Transverse colon (tissue), 4 donors: ENCODE measurements at regions of chr12 and their contacts with region 1.

Region 1: GRCh38 chr12:79993106-79993862 is 58.4 kb upstream of the PPP1R12A start:
- DNase-seq: no peak
- H3K4me3 ChIP-seq: no peak overlapping the region
- H3K27ac ChIP-seq: no peak overlapping the region
- H3K4me1 ChIP-seq: peaks cover 0 to 2% (median 0%) of the 10 kb centered on the region in 4 donors
- H3K27me3 ChIP-seq: no peaks in the 10 kb centered on the region
- CTCF ChIP-seq: no peak
- EP300 ChIP-seq: no peak
- POLR2A ChIP-seq: no peak

Region 2: GRCh38 chr12:80064269-80064668 is 71.0 kb after region 1 on chr12:
- in situ Hi-C with region 1: no loop called
- intact Hi-C with region 1: loop called (anchors 2 kb)
- DNase-seq: no peak
- H3K4me3 ChIP-seq: no peak overlapping the region
- H3K27ac ChIP-seq: no peak overlapping the region
- H3K4me1 ChIP-seq: no peaks in the 10 kb centered on the region
- H3K27me3 ChIP-seq: no peaks in the 10 kb centered on the region
- CTCF ChIP-seq: no peak
- EP300 ChIP-seq: no peak
- POLR2A ChIP-seq: no peak

Region 3: GRCh38 chr12:80565271-80565670 is 572.0 kb after region 1 on chr12:
- in situ Hi-C with region 1: no loop called
- intact Hi-C with region 1: no loop called
- DNase-seq: no peak
- H3K4me3 ChIP-seq: no peak overlapping the region
- H3K27ac ChIP-seq: no peak overlapping the region
- H3K4me1 ChIP-seq: no peaks in the 10 kb centered on the region
- H3K27me3 ChIP-seq: no peaks in the 10 kb centered on the region
- CTCF ChIP-seq: no peak
- EP300 ChIP-seq: no peak
- POLR2A ChIP-seq: no peak